ENCODE measurements at regions of chr10 and their contacts with region 1.

Region 1: DNA sequence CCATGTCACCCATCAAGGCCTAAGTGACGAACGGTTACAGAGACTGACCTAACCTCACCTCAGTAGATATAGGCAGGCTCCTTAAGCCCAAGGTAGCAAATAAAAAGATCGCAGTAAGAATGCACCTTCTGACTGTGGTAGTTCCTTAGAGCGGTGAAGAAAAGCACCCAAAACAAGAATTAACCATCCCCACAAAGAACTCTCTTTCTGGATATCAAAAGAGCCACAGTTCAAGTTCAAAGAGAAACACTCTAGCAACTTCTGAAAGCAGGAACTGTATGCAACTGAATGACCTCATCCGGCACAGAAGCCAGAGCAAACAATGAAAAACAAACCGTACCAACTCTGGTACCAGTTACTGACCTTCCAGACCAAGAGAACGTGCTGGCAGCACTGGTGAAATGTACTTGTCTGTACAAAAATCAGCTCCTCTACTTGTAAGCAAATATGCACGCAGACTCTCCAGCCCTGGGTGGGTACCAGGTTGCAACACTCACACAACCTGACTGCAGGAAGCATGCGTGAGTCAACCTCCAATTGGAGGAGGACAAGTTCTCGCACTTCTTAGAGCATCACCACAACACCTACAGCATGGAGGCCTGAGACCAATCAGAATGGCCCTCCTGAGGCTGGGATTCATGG is 202.7 kb downstream of the FAM107B start:
- DNase-seq: peak; percentile 45 to 91 (median 68)
- ATAC-seq: peak; percentile 75 to 82 (median 78)
- H3K4me3 ChIP-seq: peak overlapping the region; percentile 57 to 86
- H3K4me3 Mint-ChIP-seq: peak overlapping the region; percentile 85 to 91 (median 90)
- H3K27ac ChIP-seq: peak overlapping the region; percentile 95
- H3K27ac Mint-ChIP-seq: peak overlapping the region; percentile 99 to 100
- H3K4me1 ChIP-seq: peaks cover 48 to 63% of the 10 kb centered on the region in 2 experiments
- H3K4me1 Mint-ChIP-seq: peaks cover 82 to 93% (median 93%) of the 10 kb centered on the region in 3 donors
- H3K27me3 ChIP-seq: no peaks in the 10 kb centered on the region
- H3K27me3 Mint-ChIP-seq: no peaks in the 10 kb centered on the region

Region 2: GRCh38 chr10:14556285-14556956 is 15.6 kb before region 1 on chr10:
- CTCF ChIA-PET with region 1: interaction called, 3 to 5 read pairs
- POLR2A ChIA-PET with region 1: interaction called, 5 to 24 read pairs
- DNase-seq: peak in 13 of 35 experiments; percentile 24 to 65 (median 36)
- ATAC-seq: peak in 3 of 4 experiments; percentile 8 to 29 (median 20)
- H3K4me3 ChIP-seq: no peak overlapping the region
- H3K4me3 Mint-ChIP-seq: peak overlapping the region; percentile 50 to 85 (median 61)
- H3K27ac ChIP-seq: peak overlapping the region; percentile 76
- H3K27ac Mint-ChIP-seq: peak overlapping the region; percentile 94 to 95
- H3K4me1 ChIP-seq: peaks cover 66 to 87% of the 10 kb centered on the region in 2 experiments
- H3K4me1 Mint-ChIP-seq: peaks cover 96 to 97% (median 97%) of the 10 kb centered on the region in 3 donors
- H3K27me3 ChIP-seq: no peaks in the 10 kb centered on the region
- H3K27me3 Mint-ChIP-seq: no peaks in the 10 kb centered on the region

Region 3: GRCh38 chr10:14583252-14583651 is 11.3 kb after region 1 on chr10:
- CTCF ChIA-PET with region 1: interaction called, 4 to 5 read pairs
- POLR2A ChIA-PET with region 1: interaction called, 12 to 64 read pairs
- DNase-seq: peak; percentile 56 to 94 (median 84)
- ATAC-seq: peak; percentile 75 to 90 (median 88)
- H3K4me3 ChIP-seq: no peak overlapping the region
- H3K4me3 Mint-ChIP-seq: peak overlapping the region; percentile 61 to 72 (median 71)
- H3K27ac ChIP-seq: peak overlapping the region; percentile 95
- H3K27ac Mint-ChIP-seq: peak overlapping the region; percentile 92 to 99
- H3K4me1 ChIP-seq: peaks cover 61 to 87% of the 10 kb centered on the region in 2 experiments
- H3K4me1 Mint-ChIP-seq: peaks cover 94 to 97% (median 94%) of the 10 kb centered on the region in 3 donors
- H3K27me3 ChIP-seq: no peaks in the 10 kb centered on the region
- H3K27me3 Mint-ChIP-seq: no peaks in the 10 kb centered on the region

Region 4: DNA sequence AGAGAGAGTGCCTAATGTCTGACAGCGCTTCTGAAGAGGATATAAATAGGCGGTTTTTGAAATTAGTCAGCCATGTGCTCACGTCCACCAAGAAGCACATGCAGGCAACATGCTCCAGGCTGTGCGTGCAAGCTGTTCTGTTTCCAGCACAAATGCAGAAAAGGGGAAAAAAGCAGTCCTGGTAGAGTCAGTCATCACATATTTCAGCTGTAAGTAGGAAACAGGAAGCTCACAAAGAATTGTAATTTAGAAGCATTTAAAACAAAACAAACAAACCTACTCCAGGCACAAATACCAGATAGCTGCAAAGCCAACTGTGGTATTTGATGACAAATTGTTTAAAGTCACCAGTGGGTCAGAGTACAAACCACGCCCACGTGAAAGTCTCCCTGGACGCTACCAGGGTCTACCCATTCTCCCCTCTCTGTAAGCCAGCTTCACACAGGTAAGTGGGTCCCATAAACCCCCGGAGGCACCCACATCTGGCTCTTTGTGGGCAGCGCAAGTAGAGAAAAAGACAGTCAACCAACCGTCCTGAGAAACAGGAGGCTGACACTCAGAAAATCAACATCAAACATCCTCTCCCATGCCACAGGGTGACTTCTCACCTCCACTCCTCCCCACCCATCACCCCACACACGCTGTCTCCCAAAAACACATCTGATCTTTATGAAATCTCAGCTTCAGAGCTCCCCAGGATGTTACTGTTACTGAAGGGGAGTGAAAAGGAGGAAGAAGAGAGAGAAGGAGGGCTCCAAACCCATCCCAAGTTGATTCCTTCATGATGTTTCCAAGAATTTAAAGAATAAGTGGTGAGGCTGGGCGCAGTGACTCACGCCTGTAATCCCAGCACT is 16.3 kb after region 1 on chr10:
- CTCF ChIA-PET with region 1: interaction called in 1 of 2 experiments, 5 read pairs
- POLR2A ChIA-PET with region 1: interaction called, 12 to 64 read pairs
- DNase-seq: peak in 4 of 35 experiments; percentile 20 to 72 (median 22)
- ATAC-seq: peak; percentile 3 to 36 (median 28)
- H3K4me3 ChIP-seq: peak overlapping the region; percentile 4 to 33
- H3K4me3 Mint-ChIP-seq: peak overlapping the region; percentile 61 to 70 (median 69)
- H3K27ac ChIP-seq: peak overlapping the region; percentile 95
- H3K27ac Mint-ChIP-seq: peak overlapping the region; percentile 92 to 99
- H3K4me1 ChIP-seq: peaks cover 57 to 74% of the 10 kb centered on the region in 2 experiments
- H3K4me1 Mint-ChIP-seq: peaks cover 93 to 97% (median 95%) of the 10 kb centered on the region in 3 donors
- H3K27me3 ChIP-seq: no peaks in the 10 kb centered on the region
- H3K27me3 Mint-ChIP-seq: no peaks in the 10 kb centered on the region

Region 5: DNA sequence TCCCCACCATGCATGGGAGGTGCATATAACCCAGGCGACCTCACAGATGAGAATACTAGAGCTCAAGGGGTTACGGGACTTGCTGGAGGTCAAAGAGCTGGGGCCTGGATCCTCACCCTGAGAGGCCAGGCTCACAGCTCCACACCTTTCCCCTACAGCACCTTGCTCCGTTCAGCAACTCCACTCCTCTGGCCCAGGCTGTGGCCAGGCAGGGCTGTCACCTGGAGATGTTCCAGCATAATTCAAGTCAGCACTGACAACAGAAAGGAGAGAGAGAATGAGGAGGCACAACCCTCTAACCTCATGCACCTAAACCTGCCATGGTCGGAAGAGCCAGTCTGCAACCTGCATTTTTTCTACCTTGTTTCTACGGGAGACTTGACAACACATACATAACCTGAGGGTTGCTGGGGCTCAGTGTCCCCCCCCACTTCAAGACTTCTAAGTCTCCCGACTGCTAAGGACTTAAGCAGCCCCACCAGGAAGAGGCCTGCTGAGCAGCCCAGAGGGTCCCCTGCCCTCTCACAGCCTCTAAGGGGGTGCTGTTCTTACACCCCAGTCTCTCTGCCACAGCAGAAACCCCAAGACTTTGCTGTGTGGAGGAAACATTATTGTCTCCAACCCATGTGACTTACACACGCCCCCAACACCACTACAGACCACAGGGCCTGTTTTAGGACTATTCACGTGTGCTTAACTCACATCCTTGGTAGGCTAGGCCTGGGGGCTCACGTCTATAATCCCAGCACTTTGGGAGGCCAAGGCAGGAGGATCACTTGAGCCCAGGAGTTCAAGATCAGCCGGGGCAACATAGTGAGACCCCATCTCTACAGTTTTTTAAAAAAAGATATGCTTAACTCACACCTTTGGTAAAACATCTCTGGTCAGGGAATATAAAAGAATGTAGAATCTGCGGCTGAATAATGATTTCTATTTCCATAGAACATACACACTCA is 27.1 kb after region 1 on chr10:
- CTCF ChIA-PET with region 1: interaction called in 1 of 2 experiments, 3 read pairs
- POLR2A ChIA-PET with region 1: interaction called, 10 to 23 read pairs
- DNase-seq: peak in 9 of 35 experiments; percentile 9 to 61 (median 47)
- ATAC-seq: peak in 1 of 4 experiments; percentile 56
- H3K4me3 ChIP-seq: no peak overlapping the region
- H3K4me3 Mint-ChIP-seq: peak overlapping the region in 1 of 3 donors; percentile 92
- H3K27ac ChIP-seq: peak overlapping the region; percentile 44
- H3K27ac Mint-ChIP-seq: peak overlapping the region; percentile 82 to 83
- H3K4me1 ChIP-seq: peaks cover 20 to 56% of the 10 kb centered on the region in 2 experiments
- H3K4me1 Mint-ChIP-seq: peaks cover 84 to 93% (median 88%) of the 10 kb centered on the region in 3 donors
- H3K27me3 ChIP-seq: no peaks in the 10 kb centered on the region
- H3K27me3 Mint-ChIP-seq: no peaks in the 10 kb centered on the region

Region 6: DNA sequence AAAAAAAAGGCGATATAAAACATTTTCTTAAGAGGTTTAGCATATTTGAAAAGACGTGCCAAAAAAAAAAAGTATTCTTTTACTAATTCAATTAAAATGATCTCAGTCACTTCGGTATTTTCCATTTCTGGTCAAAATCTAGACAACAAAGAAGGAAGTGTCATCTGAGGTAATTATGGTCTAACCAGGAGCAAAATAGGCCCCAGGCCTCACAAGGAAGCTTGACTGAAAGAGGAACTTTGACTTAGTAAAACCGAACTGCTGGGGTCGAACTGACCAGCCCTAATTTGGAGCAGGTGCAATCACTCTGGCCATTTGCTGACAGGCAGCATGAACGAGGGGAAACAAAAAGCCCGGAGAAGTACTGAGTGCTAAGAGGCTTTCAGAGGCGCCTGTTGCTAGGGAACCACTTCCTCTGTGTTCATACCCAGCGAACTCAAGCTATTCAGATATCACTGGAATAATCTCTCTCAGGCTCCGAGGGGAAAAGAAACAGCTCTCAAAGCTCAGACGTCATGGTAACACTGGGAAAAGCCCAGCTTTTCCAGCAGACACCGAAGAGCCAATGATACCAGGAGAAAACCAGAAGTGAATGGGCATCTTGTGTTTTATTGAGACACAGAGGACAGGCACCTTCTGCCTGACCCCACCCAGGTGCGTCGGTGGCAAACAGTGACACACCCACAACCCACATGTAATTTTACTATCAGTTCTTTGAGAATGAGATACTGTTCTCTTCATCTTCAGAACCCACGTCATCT is 76.2 kb after region 1 on chr10:
- CTCF ChIA-PET with region 1: no interaction called
- POLR2A ChIA-PET with region 1: interaction called in 1 of 2 experiments, 29 read pairs
- DNase-seq: peak; percentile 39 to 88 (median 69)
- ATAC-seq: peak; percentile 87 to 95 (median 92)
- H3K4me3 ChIP-seq: peak overlapping the region; percentile 39 to 75
- H3K4me3 Mint-ChIP-seq: peak overlapping the region; percentile 78 to 85 (median 79)
- H3K27ac ChIP-seq: peak overlapping the region; percentile 99
- H3K27ac Mint-ChIP-seq: peak overlapping the region; percentile 96 to 99
- H3K4me1 ChIP-seq: peaks cover 32 to 48% of the 10 kb centered on the region in 2 experiments
- H3K4me1 Mint-ChIP-seq: peaks cover 61 to 82% (median 81%) of the 10 kb centered on the region in 3 donors
- H3K27me3 ChIP-seq: no peaks in the 10 kb centered on the region
- H3K27me3 Mint-ChIP-seq: no peaks in the 10 kb centered on the region

Region 7: GRCh38 chr10:14674376-14675050 is 102.5 kb after region 1 on chr10:
- CTCF ChIA-PET with region 1: no interaction called
- POLR2A ChIA-PET with region 1: no interaction called
- DNase-seq: no peak
- ATAC-seq: no peak
- H3K4me3 ChIP-seq: no peak overlapping the region
- H3K4me3 Mint-ChIP-seq: no peak overlapping the region
- H3K27ac ChIP-seq: no peak overlapping the region
- H3K27ac Mint-ChIP-seq: no peak overlapping the region
- H3K4me1 ChIP-seq: no peaks in the 10 kb centered on the region
- H3K4me1 Mint-ChIP-seq: peaks cover 3 to 19% (median 10%) of the 10 kb centered on the region in 3 donors
- H3K27me3 ChIP-seq: no peaks in the 10 kb centered on the region
- H3K27me3 Mint-ChIP-seq: no peaks in the 10 kb centered on the region